ENCODE measurements at regions of chr12 and their contacts with region 1.

Region 1: DNA sequence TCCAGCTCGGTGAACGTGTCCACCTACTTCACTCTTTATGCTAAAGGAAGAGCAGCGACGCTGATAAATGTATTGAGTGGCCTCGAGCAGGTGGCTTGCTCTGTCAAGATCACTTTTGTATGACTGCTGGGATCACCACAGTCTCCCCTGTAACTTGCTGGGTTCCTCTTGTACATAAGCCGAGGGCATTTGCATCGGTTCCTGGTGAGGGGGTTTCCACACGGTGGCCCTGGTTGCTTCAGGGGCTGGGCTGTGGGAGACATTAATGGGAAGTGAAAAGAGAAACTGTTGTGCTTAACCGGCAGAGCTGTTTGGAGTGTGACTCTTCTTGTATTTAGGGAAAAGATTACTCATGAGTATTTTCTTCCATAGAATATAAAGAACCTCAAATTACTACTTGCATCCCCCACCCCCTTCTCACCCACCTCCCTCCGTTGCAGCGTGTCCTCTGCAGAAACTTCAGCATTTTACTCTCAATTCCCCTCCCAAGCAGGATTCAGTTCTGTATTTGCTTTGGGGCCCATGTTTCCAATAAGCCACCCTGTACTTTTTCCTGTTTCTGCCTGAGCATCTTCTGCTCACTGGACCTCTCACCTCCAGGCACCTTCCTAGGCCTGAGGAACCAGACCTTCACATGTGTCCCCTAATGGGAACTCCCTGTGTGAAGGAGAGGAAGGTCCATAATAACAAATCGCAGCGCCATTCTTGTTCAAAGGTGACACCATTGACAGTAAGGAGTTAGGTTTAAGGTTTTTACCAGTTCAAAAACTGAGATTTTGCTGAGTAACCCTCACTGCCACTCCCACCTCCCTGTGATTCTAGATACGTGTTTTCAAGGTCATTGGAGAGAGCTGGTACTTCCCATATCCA is 187.0 kb downstream of the ETV6 start:
- DNase-seq: peak; percentile 99
- ATAC-seq: peak; percentile 89
- H3K4me3 ChIP-seq: no peak overlapping the region
- H3K27ac ChIP-seq: peak overlapping the region; percentile 97
- H3K4me1 ChIP-seq: peaks cover 76% of the 10 kb centered on the region
- H3K27me3 ChIP-seq: no peaks in the 10 kb centered on the region
- CTCF ChIP-seq: no peak
- EP300 ChIP-seq: peak; percentile 90 to 99
- POLR2A ChIP-seq: peak; percentile 68
- RAD21 ChIP-seq: peak; percentile 25; the same call in 1 of the 2 replicates

Region 2: DNA sequence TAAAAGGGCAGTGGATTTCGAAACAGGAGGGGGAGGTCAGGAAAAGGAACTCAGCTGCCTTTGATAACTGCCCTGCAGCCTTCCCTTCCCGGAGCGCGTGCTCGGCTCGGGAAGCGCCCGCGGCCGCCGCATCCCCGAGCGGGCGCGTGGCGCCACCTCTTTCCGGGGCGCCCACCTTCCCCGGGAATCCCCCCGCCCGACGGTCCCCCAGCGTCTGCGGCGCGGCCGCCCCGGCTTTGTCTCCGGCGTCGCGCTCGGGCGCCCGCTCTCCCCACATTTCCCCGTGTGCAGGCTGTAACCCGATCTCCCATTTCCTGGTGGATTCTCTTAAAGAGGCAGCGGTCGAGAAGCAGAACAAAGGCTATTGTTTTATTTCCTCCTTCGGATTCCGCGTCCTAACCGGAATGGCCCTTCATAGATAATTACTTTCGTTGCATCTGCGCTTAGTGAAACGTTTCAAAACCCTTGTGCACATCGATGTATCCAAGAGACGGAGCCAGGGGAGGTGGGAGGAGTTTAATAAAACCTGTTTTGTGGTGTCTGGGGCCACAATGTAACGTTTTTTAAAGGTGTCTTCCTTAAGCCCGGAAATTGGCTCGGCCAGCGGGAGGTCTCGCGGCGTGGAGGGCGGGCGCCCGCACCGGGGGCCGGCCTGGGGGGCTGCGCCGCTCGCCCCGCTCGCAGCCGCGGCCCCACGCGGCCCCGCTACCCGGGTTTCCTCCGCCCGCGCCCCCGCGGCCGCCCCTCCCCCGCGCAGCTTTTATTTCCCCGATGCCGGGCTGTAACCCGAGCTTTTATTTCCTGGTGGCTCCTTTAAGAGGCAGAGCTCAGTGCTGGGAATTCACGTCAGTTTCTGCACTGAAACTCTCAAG is 187.4 kb before region 1 on chr12 and contains the start of gene ETV6:
- CTCF ChIA-PET with region 1: interaction called, 3 read pairs
- POLR2A ChIA-PET with region 1: no interaction called
- RAD21 ChIA-PET with region 1: interaction called, 9 read pairs
- SMC1A ChIA-PET with region 1: interaction called, 6 read pairs
- in situ Hi-C with region 1: loop called (anchors 5 kb)
- intact Hi-C with region 1: loop called (anchors 1 kb)
- DNase-seq: peak; percentile 86
- ATAC-seq: peak; percentile 31
- H3K4me3 ChIP-seq: peak within 1 kb of the TSS; percentile 85
- H3K27ac ChIP-seq: peak within 1 kb of the TSS; percentile 99
- H3K4me1 ChIP-seq: peaks cover 3% of the 10 kb centered on the region; the same call in 1 of the 2 replicates
- H3K27me3 ChIP-seq: no peaks in the 10 kb centered on the region
- CTCF ChIP-seq: no peak
- EP300 ChIP-seq: peak; percentile 33 to 46; a peak in 3 of 4 replicates
- POLR2A ChIP-seq: peak; percentile 80
- RAD21 ChIP-seq: no peak; the same call in 1 of the 2 replicates
- polyA plus RNA-seq, gene ETV6: 6.6 to 10.4 TPM

Region 3: DNA sequence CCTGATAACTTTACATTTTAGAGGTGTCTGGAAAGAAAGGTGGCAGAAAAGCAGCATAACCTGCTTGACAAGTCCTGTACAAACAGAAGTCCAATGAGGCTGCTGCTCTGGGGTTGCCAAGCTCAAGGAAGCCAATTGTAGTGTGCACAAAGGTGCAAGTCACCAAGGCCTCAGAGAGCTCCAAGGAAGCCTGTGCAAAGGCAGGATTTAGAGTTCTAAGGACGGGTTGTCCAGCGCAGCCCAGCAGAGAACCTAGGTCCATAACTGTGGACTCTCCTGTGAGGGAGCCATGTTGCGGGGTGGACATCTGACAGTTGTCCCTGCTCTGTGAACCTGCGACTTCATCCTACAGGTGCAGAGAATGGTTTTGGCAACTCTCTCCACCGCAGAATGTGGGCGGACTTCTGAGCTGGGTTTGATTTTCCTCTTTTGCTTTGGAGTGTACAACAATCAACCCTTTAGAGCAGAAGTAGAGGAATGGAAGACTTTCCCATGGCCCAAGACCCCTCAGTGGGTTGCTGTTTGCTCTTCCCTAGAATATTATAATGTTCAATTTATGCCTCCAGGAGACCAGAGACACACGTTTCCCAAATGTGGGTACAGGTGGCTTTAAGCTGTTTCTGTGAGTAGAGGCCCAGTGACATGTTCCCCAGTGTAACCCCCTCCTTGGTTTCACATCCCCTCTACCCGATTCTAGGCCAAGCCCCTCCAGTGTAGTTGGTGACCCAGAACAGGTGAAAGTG is 106.0 kb before region 1 on chr12:
- CTCF ChIA-PET with region 1: interaction called, 9 read pairs
- POLR2A ChIA-PET with region 1: interaction called, 4 read pairs
- RAD21 ChIA-PET with region 1: interaction called, 9 read pairs
- SMC1A ChIA-PET with region 1: interaction called, 10 read pairs
- in situ Hi-C with region 1: no loop called
- intact Hi-C with region 1: loop called (anchors 1 kb)
- DNase-seq: peak; percentile 85
- ATAC-seq: peak; percentile 49
- H3K4me3 ChIP-seq: peak overlapping the region; percentile 18; the same call in 1 of the 2 replicates
- H3K27ac ChIP-seq: peak overlapping the region; percentile 89
- H3K4me1 ChIP-seq: peaks cover 93% of the 10 kb centered on the region
- H3K27me3 ChIP-seq: no peaks in the 10 kb centered on the region
- CTCF ChIP-seq: no peak
- EP300 ChIP-seq: peak in 1 of 2 experiments; percentile 52; a peak in 2 of 4 replicates
- POLR2A ChIP-seq: peak; percentile 62; the same call in 1 of the 2 replicates
- RAD21 ChIP-seq: peak; percentile 34

Region 4: GRCh38 chr12:11765817-11766794 is 70.4 kb before region 1 on chr12:
- CTCF ChIA-PET with region 1: interaction called, 3 read pairs
- POLR2A ChIA-PET with region 1: interaction called, 7 read pairs
- RAD21 ChIA-PET with region 1: interaction called, 86 read pairs
- SMC1A ChIA-PET with region 1: interaction called, 140 read pairs
- in situ Hi-C with region 1: no loop called
- intact Hi-C with region 1: loop called (anchors 1 kb)
- DNase-seq: peak; percentile 92
- ATAC-seq: peak; percentile 75
- H3K4me3 ChIP-seq: peak overlapping the region; percentile 11; the same call in 1 of the 2 replicates
- H3K27ac ChIP-seq: peak overlapping the region; percentile 100
- H3K4me1 ChIP-seq: peaks cover 92% of the 10 kb centered on the region
- H3K27me3 ChIP-seq: no peaks in the 10 kb centered on the region
- CTCF ChIP-seq: no peak
- EP300 ChIP-seq: peak; percentile 81 to 89
- POLR2A ChIP-seq: 0 out of 2 replicates have a peak, but pooled peaks have one; percentile 32
- RAD21 ChIP-seq: peak; percentile 19; the same call in 1 of the 2 replicates

Region 5: GRCh38 chr12:11812586-11813427 is 23.7 kb before region 1 on chr12:
- CTCF ChIA-PET with region 1: interaction called, 5 read pairs
- POLR2A ChIA-PET with region 1: interaction called, 24 read pairs
- RAD21 ChIA-PET with region 1: interaction called, 6 read pairs
- SMC1A ChIA-PET with region 1: interaction called, 75 read pairs
- in situ Hi-C with region 1: no loop called
- intact Hi-C with region 1: no loop called
- DNase-seq: no peak
- ATAC-seq: peak; percentile 89
- H3K4me3 ChIP-seq: peak overlapping the region; percentile 61
- H3K27ac ChIP-seq: peak overlapping the region; percentile 93
- H3K4me1 ChIP-seq: peaks cover 41% of the 10 kb centered on the region
- H3K27me3 ChIP-seq: no peaks in the 10 kb centered on the region
- CTCF ChIP-seq: peak; percentile 19 to 38 (median 20); a peak in 4 of 6 replicates
- EP300 ChIP-seq: no peak
- POLR2A ChIP-seq: peak; percentile 40; the same call in 1 of the 2 replicates
- RAD21 ChIP-seq: peak; percentile 34; the same call in 1 of the 2 replicates

Region 6: DNA sequence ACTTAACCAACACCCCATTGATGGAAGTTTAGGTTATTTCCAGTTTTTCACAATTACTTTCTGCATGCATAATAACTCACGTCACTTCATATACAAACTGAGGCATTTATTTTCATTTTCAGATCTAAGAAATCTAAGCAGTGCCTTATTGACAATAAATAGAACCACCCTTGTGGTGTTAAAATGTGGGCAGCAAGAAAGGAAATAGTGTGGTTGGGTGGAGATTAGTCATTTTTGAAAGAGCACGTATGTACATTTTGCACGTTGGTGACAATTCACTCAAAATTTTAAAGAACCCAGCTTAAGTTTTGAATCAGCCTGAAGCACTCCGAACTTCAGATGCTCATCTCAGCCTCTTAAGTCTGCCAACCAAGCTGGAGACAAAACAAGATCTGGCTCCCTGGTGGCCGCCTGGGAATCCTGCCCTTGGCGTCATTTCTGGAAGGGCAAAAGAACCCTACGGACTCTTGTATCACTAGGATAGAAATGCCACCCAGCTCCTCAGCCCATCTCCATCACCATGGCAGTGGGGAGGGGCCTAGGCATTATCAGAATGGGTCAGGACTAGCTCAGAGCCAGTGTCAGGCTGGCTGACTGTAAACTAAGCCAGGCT is 144.7 kb after region 1 on chr12:
- CTCF ChIA-PET with region 1: no interaction called
- POLR2A ChIA-PET with region 1: interaction called, 3 read pairs
- RAD21 ChIA-PET with region 1: interaction called, 5 read pairs
- SMC1A ChIA-PET with region 1: interaction called, 21 read pairs
- in situ Hi-C with region 1: no loop called
- intact Hi-C with region 1: loop called (anchors 2 kb)
- DNase-seq: peak; percentile 98
- ATAC-seq: peak; percentile 90
- H3K4me3 ChIP-seq: peak overlapping the region; percentile 19; the same call in 1 of the 2 replicates
- H3K27ac ChIP-seq: peak overlapping the region; percentile 96
- H3K4me1 ChIP-seq: peaks cover 23% of the 10 kb centered on the region
- H3K27me3 ChIP-seq: no peaks in the 10 kb centered on the region
- CTCF ChIP-seq: no peak
- EP300 ChIP-seq: peak; percentile 99
- POLR2A ChIP-seq: no peak
- RAD21 ChIP-seq: peak; percentile 26; the same call in 1 of the 2 replicates

Region 7: DNA sequence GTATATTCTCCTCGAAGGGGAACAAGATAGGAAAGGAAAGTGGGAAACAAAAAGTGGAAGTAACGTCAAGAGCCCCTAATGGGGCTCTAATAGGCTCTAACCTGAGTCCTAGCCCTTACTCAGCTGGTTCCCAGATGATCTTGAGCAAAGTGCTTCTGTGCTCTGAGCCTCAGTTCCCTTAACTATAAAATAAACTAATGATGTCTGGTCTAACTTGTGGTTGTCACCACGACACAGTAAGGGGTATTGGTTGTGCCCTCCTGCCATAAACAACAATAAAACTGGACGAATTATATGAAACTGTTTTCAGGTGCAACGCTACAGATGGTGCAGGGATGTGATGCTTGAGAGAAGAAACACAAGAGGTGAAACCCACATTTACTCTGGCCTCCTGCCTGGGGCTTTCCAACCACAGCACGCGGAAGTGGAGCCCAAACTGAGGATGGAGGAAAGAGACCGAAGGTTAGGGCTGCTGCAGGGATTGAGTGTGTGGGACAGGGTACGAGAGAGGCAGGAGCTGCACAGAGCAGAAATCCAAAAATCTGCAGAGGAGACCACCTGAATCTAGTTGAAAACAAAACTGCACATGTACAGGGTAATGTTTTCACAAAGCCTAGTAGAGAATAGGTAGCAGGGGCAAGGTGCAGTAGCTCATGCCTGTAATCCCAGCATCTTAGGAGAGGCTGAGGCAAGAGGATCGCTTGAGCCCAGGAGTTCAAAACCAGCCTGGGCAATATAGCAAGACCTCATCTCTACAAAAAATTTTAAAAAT is 188.6 kb after region 1 on chr12:
- CTCF ChIA-PET with region 1: interaction called, 7 read pairs
- POLR2A ChIA-PET with region 1: interaction called, 3 read pairs
- RAD21 ChIA-PET with region 1: interaction called, 3 read pairs
- SMC1A ChIA-PET with region 1: interaction called, 3 read pairs
- in situ Hi-C with region 1: no loop called
- intact Hi-C with region 1: loop called (anchors 2 kb)
- DNase-seq: peak; percentile 93
- ATAC-seq: peak; percentile 83
- H3K4me3 ChIP-seq: peak overlapping the region; percentile 4
- H3K27ac ChIP-seq: peak overlapping the region; percentile 74
- H3K4me1 ChIP-seq: peaks cover 40% of the 10 kb centered on the region
- H3K27me3 ChIP-seq: no peaks in the 10 kb centered on the region
- CTCF ChIP-seq: no peak
- EP300 ChIP-seq: peak; percentile 92 to 94
- POLR2A ChIP-seq: no peak
- RAD21 ChIP-seq: no peak

Measured in GM12878 (cell line).